CD14-positive monocyte (primary cell): ENCODE measurements at regions of chr3 and their contacts with region 1.

Region 1: GRCh38 chr3:153246806-153247205 is 84.8 kb downstream of the RAP2B start:
- DNase-seq: peak; percentile 32 to 64 (median 49)
- H3K4me3 ChIP-seq: peak overlapping the region in 1 of 3 experiments; percentile 34
- H3K4me3 Mint-ChIP-seq: no peak overlapping the region
- H3K27ac ChIP-seq: peak overlapping the region in 1 of 2 donors; percentile 93
- H3K27ac Mint-ChIP-seq: peak overlapping the region; percentile 91 to 98 (median 95)
- H3K4me1 ChIP-seq: peaks cover 69 to 87% of the 10 kb centered on the region in 2 donors
- H3K4me1 Mint-ChIP-seq: peaks cover 64% of the 10 kb centered on the region
- H3K27me3 ChIP-seq: no peaks in the 10 kb centered on the region
- H3K27me3 Mint-ChIP-seq: peaks cover 0 to 1% (median 0%) of the 10 kb centered on the region in 3 donors
- CTCF ChIP-seq: no peak

Region 2: GRCh38 chr3:153221748-153222162 is 25.1 kb before region 1 on chr3:
- intact Hi-C with region 1: loop called in 1 of 2 experiments (anchors 2 kb)
- DNase-seq: peak; percentile 98 to 100 (median 99)
- H3K4me3 ChIP-seq: peak overlapping the region in 2 of 3 experiments; percentile 20 to 53
- H3K4me3 Mint-ChIP-seq: peak overlapping the region; percentile 41 to 70
- H3K27ac ChIP-seq: peak overlapping the region; percentile 87 to 96
- H3K27ac Mint-ChIP-seq: peak overlapping the region; percentile 97 to 99 (median 98)
- H3K4me1 ChIP-seq: peaks cover 48 to 51% of the 10 kb centered on the region in 2 donors
- H3K4me1 Mint-ChIP-seq: peaks cover 50% of the 10 kb centered on the region
- H3K27me3 ChIP-seq: no peaks in the 10 kb centered on the region
- H3K27me3 Mint-ChIP-seq: peaks cover 0 to 2% (median 2%) of the 10 kb centered on the region in 3 donors
- CTCF ChIP-seq: no peak